Esophagus muscularis mucosa (tissue), 4 donors: ENCODE measurements at regions of chr17 and their contacts with region 1.

Region 1: GRCh38 chr17:4789901-4790704 is 1.3 kb downstream of the GLTPD2 start:
- DNase-seq: peak; percentile 94
- H3K4me3 ChIP-seq: peak overlapping the region; percentile 71 to 84 (median 74)
- H3K27ac ChIP-seq: peak overlapping the region; percentile 94 to 98 (median 98)
- H3K4me1 ChIP-seq: peaks cover 34 to 47% (median 45%) of the 10 kb centered on the region in 4 donors
- H3K27me3 ChIP-seq: peaks cover 0 to 9% (median 3%) of the 10 kb centered on the region in 4 donors
- CTCF ChIP-seq: peak; percentile 81 to 85 (median 82)
- EP300 ChIP-seq: no peak
- POLR2A ChIP-seq: peak; percentile 54

Region 2: GRCh38 chr17:4733073-4733531 is 57.0 kb before region 1 on chr17:
- intact Hi-C with region 1: loop called (anchors 2 kb)
- DNase-seq: no peak
- H3K4me3 ChIP-seq: no peak overlapping the region
- H3K27ac ChIP-seq: peak overlapping the region in 1 of 4 donors; percentile 30
- H3K4me1 ChIP-seq: peaks cover 9 to 24% (median 19%) of the 10 kb centered on the region in 4 donors
- H3K27me3 ChIP-seq: no peaks in the 10 kb centered on the region
- CTCF ChIP-seq: peak in 1 of 3 experiments; percentile 8
- EP300 ChIP-seq: no peak
- POLR2A ChIP-seq: no peak

Region 3: GRCh38 chr17:4891411-4892342 is 101.6 kb after region 1 on chr17:
- intact Hi-C with region 1: loop called (anchors 2 kb)
- DNase-seq: no peak
- H3K4me3 ChIP-seq: no peak overlapping the region
- H3K27ac ChIP-seq: no peak overlapping the region
- H3K4me1 ChIP-seq: peaks cover 0 to 5% (median 0%) of the 10 kb centered on the region in 4 donors
- H3K27me3 ChIP-seq: no peaks in the 10 kb centered on the region
- CTCF ChIP-seq: no peak
- EP300 ChIP-seq: no peak
- POLR2A ChIP-seq: no peak